KBM-7 (cell line): ENCODE measurements at regions of chr11 and their contacts with region 1.

Region 1: GRCh38 chr11:14892036-14892567 is at the start of gene CYP2R1:
- DNase-seq: peak; percentile 96

Region 2: DNA sequence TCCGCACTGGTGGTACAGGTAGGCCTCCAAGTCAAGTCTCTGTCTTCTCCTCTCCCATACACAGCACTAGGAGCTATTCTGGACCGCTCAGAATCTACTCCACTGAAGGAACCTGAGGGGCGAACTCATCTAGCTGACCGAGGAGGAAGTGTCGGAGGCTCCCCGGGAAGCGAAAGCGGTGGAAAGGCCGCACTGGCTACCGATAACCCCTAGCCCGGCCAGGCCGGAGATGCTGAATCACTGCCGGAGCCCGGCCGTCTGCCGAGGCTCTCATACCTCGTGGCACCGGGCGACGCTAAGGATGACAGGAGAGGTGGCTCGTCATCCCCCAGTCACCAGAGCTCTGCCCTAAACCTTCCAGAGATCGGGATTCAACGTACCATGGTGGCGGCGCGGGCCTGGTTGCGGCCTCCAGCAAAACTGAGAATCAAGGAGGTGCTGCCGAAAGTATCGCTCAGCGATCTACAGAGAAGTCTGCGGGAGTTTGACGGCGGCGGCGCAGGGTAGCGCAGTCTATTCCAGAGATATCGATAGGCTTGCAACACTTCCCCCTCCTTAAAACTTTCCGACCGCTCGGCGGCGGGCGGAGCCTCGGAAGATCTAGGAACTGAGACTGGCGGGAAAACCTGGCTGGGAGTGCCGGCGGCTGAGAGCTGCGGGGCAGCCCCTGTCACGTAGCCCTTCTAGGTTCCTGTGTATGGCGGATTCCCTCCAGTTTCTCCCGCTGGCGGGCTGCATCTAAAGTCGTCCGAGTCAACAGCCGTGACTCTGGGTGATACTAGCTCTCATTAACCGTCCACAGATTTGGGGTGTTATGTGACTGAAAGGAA is 372.0 kb before region 1 on chr11 and contains the start of gene PSMA1:
- in situ Hi-C with region 1: loop called (anchors 25 kb)
- DNase-seq: peak; percentile 97